ENCODE measurements at regions of chr11 and their contacts with region 1.

Region 1: GRCh38 chr11:82038153-82038552 is 695.5 kb downstream of the FAM181B start:
- DNase-seq: no peak
- ATAC-seq: no peak

Region 2: DNA sequence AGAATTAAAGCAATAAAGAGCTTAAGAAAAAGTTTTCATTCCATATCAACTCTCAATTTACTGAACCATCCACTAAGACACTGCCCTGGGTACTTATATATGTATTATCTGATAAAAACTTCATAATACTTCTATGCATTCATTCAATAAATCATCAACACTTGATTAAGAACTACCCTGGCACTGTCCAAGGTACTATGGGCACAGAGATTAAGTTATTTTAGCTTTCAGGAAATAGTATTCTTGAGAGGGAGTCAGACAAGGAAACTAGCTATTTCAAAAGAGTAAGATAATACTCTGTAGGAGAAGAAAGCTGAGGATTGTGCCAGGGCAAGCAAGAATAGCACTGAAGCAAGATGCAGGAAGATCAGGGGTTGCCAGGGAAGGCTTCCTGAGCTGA is 54.8 kb after region 1 on chr11:
- intact Hi-C with region 1: loop called (anchors 10 kb)
- DNase-seq: no peak
- ATAC-seq: no peak

Measured in Right ventricle myocardium superior (tissue), 1 donor.